ENCODE measurements at regions of chr17 and their contacts with region 1.

Region 1: DNA sequence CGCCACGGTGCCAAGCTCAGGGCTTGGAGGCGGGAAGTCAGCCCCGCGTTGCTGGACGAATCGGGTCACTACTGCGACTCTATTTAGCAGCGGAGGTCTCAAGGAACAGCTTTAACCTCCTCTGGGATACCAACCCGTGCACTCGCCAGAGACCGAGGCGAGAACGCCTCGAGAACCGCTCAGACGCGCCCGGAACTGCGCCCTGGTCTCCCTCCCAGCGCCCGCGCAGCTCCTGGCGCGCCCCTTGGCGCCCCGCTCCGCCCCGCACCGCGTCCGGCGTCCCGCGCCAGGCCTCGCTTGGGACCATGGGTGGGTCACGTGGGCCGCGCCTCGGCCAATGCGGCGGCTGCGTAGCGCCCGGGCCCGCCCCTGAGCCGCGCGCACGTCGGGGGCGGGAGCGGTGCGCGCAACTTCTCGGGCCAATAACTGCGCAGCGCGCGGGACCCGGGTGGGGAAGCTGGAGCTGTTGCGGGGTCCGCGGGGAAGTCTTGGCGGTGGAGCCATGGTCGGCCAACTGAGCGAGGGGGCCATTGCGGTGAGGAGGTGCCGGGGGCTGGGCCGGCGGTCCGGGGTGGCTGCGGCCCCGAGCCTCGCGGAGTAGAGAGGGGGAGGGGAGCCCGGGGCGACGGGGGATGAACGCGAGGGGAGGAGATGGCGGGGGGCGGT is at the starts of genes RPA1 and SMYD4:
- DNase-seq: peak; percentile 92 to 94
- ATAC-seq: peak; percentile 97 to 99 (median 98)
- H3K4me3 ChIP-seq: peak within 1 kb of the TSS; percentile 83
- H3K27ac ChIP-seq: peak within 1 kb of the TSS; percentile 93
- H3K4me1 ChIP-seq: peaks cover 30% of the 10 kb centered on the region
- H3K27me3 ChIP-seq: no peaks in the 10 kb centered on the region
- CTCF ChIP-seq: no peak
- total RNA-seq, gene RPA1: 52.6 to 82.1 (median 75.2) TPM
- total RNA-seq, gene SMYD4: 8.8 to 18.0 (median 12.7) TPM

Region 2: DNA sequence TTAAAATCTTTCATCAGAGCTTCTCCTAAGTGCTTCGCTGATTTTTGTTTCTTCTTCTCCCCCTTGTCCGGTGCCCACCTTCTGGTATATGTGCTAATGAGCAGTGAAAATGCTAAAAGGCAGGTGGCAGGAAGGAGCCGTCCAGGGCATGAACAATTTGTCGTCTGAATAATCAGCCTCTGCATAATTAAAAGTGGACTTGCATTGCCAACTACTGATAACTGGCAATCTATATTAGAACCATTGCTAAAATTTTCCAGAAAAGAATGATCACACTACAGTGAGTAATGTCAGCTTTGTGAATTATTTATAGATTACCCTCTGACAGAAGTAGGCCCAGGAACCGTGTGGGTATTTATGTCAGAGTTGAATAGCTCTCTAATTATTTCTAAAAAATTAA is 39.8 kb before region 1 on chr17:
- intact Hi-C with region 1: loop called in 1 of 2 experiments (anchors 2 kb)
- DNase-seq: no peak
- ATAC-seq: peak in 2 of 4 donors; percentile 26 to 28
- H3K4me3 ChIP-seq: no peak overlapping the region
- H3K27ac ChIP-seq: peak overlapping the region; percentile 99
- H3K4me1 ChIP-seq: peaks cover 55% of the 10 kb centered on the region
- H3K27me3 ChIP-seq: no peaks in the 10 kb centered on the region
- CTCF ChIP-seq: no peak

Region 3: DNA sequence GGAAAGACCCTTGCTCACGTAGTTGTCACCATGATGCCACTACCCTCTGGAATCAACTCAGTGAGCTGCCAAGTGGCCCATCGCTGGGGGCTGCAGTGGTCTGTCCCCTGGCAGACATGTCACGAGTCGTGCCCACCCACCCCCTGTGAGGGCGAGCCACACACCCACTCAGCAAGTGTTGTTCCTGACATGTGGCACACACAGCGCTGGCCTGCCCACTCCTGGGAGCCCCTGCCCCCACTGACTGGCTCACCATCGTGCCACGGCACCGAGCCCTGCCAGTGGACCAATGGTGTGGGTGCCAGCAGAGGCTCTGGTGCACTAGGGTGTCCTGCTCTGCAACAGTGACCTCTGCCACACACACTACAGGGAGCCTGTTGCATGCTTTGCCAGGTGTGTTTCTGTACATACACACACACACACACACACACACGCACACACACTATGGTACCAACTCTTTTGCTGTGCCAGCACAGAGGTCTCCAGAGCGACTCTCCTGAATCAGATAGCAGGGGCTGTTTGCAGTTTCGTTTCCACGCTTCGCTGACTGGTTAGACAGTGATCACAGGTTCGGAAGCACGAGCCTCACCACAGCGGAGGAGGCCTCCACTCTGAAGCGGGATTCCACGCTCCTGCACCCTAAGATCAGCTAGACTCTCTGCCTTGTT is 187.7 kb after region 1 on chr17:
- intact Hi-C with region 1: no loop called
- DNase-seq: peak in 1 of 2 donors; percentile 48
- ATAC-seq: peak in 3 of 4 donors; percentile 42 to 59 (median 50)
- H3K4me3 ChIP-seq: no peak overlapping the region
- H3K27ac ChIP-seq: no peak overlapping the region
- H3K4me1 ChIP-seq: peaks cover 6% of the 10 kb centered on the region
- H3K27me3 ChIP-seq: no peaks in the 10 kb centered on the region
- CTCF ChIP-seq: no peak

Measured in psoas muscle (tissue), 8 donors.